HEK293T (cell line): ENCODE measurements at regions of chr20 and their contacts with region 1.

Region 1: GRCh38 chr20:33351696-33352095 is 49.6 kb downstream of the CDK5RAP1 start:
- DNase-seq: no peak

Region 2: GRCh38 chr20:33370296-33370695 is 18.6 kb after region 1 on chr20:
- CTCF ChIA-PET with region 1: interaction called, 10 read pairs
- POLR2A ChIA-PET with region 1: no interaction called
- DNase-seq: no peak

Region 3: GRCh38 chr20:33401184-33401920 is 49.7 kb after region 1 on chr20 and contains the start of gene CDK5RAP1:
- CTCF ChIA-PET with region 1: no interaction called
- POLR2A ChIA-PET with region 1: no interaction called
- DNase-seq: peak; percentile 88

Region 4: DNA sequence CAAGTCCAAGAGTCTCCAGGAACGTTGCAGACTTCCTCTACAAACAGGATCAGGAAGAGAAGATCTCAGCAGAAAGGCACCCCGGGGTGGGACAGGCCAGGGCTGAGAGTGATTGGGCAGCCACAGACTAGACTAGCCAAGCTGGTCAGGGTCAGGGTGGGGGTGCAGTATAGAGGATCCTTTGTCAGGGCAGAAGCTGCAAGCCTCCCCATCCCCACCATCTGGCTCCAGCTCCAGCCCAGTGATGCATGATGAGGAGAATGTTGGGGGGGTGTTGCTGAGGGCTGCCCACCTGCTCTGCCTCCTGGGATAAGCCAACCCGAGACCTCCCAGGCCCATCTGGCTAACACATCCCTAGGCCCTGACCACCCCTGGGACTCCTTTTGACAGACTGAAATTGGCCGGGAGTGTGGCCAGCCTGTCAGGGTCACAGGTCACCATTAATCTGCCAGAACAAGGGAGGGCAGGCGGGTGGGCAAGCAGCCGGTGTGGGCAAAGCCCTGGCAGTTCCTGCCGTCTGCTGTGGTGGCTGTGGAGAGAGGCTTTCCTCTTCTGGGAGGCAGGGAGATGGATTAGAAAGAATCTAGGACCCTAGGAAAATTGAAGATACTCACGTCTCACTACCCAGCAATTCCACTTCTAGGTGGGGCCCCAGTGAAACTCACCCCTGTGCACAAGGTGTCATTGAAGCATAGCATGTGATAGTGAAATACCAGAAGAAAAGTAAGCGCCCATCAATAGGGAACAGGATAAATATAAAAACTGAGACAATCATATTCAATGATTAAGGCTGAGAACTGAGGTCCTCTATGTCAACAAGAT is 114.0 kb after region 1 on chr20:
- CTCF ChIA-PET with region 1: no interaction called
- POLR2A ChIA-PET with region 1: no interaction called
- DNase-seq: no peak